ENCODE measurements at regions of chr13 and their contacts with region 1.

Region 1: GRCh38 chr13:70960841-70961443 is 852.7 kb upstream of the KLHL1 start:
- DNase-seq: no peak
- H3K4me3 ChIP-seq: no peak overlapping the region
- H3K27ac ChIP-seq: no peak overlapping the region
- H3K4me1 ChIP-seq: no peaks in the 10 kb centered on the region
- H3K27me3 ChIP-seq: no peaks in the 10 kb centered on the region
- CTCF ChIP-seq: peak; percentile 51

Region 2: DNA sequence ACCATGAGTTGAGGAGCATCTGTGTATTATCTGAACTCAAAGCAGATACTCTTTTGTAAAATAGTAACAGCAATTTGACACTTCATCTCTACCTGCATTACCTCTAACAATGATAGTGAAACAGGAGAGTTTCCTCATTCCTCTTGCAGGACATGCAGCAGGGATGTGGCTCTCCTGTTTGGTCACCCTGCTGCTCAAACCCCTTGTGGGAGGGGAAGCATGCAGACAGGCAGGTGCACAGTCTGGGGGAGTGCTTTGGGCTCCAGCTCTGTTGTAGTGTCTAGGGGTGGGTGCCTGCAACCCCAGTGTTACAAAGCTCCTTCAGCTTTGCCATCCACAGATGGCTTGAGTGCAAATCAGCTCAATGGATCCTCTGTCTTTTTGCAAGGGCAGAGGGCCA is 78.5 kb after region 1 on chr13:
- intact Hi-C with region 1: no loop called
- DNase-seq: no peak
- H3K4me3 ChIP-seq: no peak overlapping the region
- H3K27ac ChIP-seq: no peak overlapping the region
- H3K4me1 ChIP-seq: no peaks in the 10 kb centered on the region
- H3K27me3 ChIP-seq: no peaks in the 10 kb centered on the region
- CTCF ChIP-seq: no peak

Region 3: DNA sequence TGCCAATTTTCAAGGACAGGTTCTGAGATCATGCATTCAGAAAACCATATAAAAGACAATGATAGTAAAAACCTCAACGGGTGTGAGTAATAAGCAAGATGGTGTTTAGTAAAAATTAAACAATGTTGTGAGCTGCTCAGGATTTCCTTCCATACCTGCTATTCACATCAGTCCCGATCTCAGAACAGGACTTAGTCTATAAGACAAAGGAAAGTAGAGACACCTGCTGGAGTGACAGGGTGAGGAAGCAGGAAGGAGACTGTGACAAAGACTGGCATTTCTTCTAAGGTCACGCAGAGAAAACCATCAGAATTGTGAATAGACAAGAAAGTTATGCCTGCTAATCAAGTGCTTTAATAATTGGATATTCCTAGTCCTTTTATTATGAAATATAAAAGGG is 258.0 kb after region 1 on chr13:
- intact Hi-C with region 1: loop called (anchors 10 kb)
- DNase-seq: no peak
- H3K4me3 ChIP-seq: no peak overlapping the region
- H3K27ac ChIP-seq: no peak overlapping the region
- H3K4me1 ChIP-seq: no peaks in the 10 kb centered on the region
- H3K27me3 ChIP-seq: no peaks in the 10 kb centered on the region
- CTCF ChIP-seq: peak; percentile 28